ENCODE measurements at regions of chr12 and their contacts with region 1.

Region 1: DNA sequence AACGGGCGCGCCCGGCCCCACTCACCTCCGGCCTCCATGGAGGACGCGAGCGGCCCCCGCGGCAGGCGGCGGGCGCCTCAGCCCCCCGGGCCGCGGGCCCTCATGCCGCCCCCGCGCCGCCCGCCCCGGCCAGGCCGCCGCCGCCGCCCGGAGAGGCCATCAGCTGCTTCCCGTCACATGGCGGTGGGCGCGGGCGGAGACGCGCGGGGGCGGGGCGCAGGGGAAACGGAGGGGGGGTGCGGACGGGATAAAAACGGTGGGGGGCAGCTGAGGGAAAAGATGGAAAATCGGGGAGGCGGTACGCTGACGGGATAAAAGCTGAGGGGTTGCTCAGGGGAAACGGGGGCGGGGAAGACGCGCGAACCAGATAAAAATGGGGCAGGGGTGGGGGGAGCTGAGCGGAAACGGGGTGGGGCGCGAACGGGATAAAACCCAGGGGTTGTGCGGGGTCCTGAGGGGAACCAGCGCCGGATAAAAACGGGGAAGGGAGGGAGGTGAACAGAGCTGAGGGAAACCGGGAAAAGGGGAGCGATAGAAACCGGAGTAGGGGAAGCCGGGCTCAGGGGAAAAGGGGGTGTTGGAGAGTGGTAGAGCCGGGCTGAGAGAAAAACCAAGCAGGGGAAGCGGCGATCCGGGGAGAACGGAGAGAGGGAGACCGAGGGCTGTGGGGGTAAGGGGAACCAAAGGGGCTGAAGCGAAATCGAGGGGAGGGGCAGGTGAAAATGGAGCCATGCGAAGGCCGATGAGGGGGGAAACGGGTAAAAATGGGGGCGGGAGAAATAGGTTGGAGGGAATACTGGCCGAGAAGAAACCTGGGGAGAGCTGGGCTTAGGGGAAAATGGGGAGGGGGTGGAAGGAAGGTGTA is at the start of gene WSB2:
- DNase-seq: peak in 1 of 2 experiments; percentile 55
- H3K4me3 ChIP-seq: peak within 1 kb of the TSS; percentile 79
- H3K27ac ChIP-seq: peak within 1 kb of the TSS; percentile 94
- H3K4me1 ChIP-seq: peaks cover 34% of the 10 kb centered on the region
- H3K27me3 ChIP-seq: no peaks in the 10 kb centered on the region
- CTCF ChIP-seq: no peak
- total RNA-seq, gene WSB2: 44.2 and 46.2 TPM in 2 replicates

Region 2: GRCh38 chr12:117890137-117890536 is 171.1 kb before region 1 on chr12:
- CTCF ChIA-PET with region 1: no interaction called
- POLR2A ChIA-PET with region 1: no interaction called
- intact Hi-C with region 1: no loop called
- DNase-seq: no peak
- H3K4me3 ChIP-seq: no peak overlapping the region
- H3K27ac ChIP-seq: no peak overlapping the region
- H3K4me1 ChIP-seq: no peaks in the 10 kb centered on the region
- H3K27me3 ChIP-seq: no peaks in the 10 kb centered on the region
- CTCF ChIP-seq: no peak; the same call in 1 of the 2 replicates

Region 3: DNA sequence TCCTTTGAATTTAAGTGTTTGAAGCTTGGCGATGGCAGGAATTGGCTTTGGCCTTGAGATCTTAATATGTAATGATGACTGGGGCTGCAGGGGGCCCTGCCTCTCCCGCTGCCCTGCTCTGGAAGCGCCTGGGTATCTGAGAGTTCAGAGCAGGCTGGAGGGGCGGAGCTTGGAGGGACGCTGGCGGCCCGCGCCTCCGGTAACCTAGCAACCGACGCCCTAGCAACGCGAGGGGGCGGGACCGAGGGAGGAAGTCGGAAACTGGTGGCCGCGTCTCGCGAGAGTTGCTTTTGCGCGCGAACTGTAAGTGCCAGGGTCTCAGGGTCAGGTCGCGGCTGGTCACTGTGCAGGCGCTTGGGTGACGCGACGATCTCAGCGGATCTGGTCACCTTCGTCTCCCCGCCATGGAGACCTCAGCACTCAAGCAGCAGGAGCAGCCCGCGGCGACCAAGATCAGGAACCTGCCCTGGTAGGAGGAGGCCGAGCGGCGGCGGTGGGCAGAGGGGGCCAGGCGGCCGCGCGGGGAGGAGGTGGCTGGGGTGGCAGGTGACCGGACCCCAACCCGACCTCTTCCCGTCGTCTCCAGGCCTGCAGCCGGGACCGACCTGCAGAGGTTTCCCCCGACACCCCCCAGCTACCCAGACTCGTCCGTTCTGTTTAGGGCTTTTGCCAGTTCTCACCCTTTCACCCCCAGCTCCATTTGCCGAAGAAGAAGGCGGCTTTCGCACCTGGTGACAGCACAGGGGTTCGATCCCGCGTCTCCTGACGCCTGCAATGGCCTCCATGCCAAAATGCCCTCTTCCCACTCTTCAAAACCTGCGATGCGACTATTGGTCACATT is 44.6 kb before region 1 on chr12 and contains the start of gene RFC5:
- CTCF ChIA-PET with region 1: no interaction called
- POLR2A ChIA-PET with region 1: no interaction called
- intact Hi-C with region 1: loop called (anchors 2 kb)
- DNase-seq: peak; percentile 90 to 97
- H3K4me3 ChIP-seq: peak within 1 kb of the TSS; percentile 89
- H3K27ac ChIP-seq: no peak within 1 kb of the TSS
- H3K4me1 ChIP-seq: peaks cover 16% of the 10 kb centered on the region
- H3K27me3 ChIP-seq: no peaks in the 10 kb centered on the region
- CTCF ChIP-seq: no peak
- total RNA-seq, gene RFC5: 30.3 and 34.7 TPM in 2 replicates

Region 4: DNA sequence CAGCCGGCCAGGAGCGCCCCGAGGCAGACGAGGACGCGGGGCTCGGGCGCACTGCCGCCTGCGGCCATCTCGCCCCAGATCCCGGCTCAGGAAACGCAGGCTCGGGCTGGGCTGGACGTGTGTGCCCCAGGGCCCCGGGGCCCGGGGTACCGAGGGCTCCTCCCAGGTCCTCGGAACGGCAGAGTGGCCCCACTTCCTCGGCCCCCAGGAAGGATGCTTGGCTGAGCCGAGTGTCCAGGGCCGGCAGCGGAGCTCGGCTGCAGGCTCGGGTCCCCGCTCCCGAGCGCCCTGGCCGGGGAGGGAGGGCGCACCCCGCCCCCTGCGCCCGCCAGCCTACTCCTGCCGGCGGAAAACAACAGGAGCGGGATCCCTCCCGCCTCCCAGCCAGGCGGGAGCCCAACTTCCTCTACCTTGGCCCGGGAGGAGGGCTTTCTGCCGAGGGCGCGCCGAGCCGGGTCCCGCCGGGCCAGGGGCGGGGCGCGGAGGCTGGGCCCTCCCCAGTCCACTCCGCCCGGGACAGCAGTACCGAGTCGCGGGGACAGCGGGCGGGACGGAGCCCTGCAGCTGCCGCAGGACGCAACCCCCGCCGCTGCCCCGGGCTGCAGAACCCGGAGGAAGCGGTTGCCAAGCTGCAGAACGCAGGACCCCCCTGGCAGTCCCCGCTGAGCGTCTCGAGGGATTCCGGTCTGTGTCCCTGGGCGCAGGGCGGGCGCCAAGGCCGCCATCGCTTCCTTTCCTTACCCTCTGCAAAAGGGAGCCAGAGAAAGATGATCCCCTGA is 42.5 kb after region 1 on chr12 and contains the start of gene VSIG10:
- CTCF ChIA-PET with region 1: no interaction called
- POLR2A ChIA-PET with region 1: interaction called, 5 read pairs
- intact Hi-C with region 1: loop called (anchors 1 kb)
- DNase-seq: peak; percentile 49 to 82
- H3K4me3 ChIP-seq: peak within 1 kb of the TSS; percentile 81
- H3K27ac ChIP-seq: 0 out of 2 replicates have a peak within 1 kb of the TSS, but pooled peaks have one; percentile 2
- H3K4me1 ChIP-seq: peaks cover 18% of the 10 kb centered on the region
- H3K27me3 ChIP-seq: no peaks in the 10 kb centered on the region
- CTCF ChIP-seq: no peak
- total RNA-seq, gene VSIG10: 45.7 and 49.1 TPM in 2 replicates

Region 5: GRCh38 chr12:118372541-118373495 is 311.6 kb after region 1 on chr12 and contains the start of gene TAOK3:
- CTCF ChIA-PET with region 1: interaction called, 5 read pairs
- POLR2A ChIA-PET with region 1: interaction called, 3 read pairs
- intact Hi-C with region 1: loop called (anchors 1 kb)
- DNase-seq: peak; percentile 96 to 97
- H3K4me3 ChIP-seq: peak within 1 kb of the TSS; percentile 77
- H3K27ac ChIP-seq: peak within 1 kb of the TSS; percentile 72
- H3K4me1 ChIP-seq: peaks cover 30% of the 10 kb centered on the region
- H3K27me3 ChIP-seq: no peaks in the 10 kb centered on the region
- CTCF ChIP-seq: no peak
- total RNA-seq, gene TAOK3: 55.8 and 60.5 TPM in 2 replicates

Region 6: DNA sequence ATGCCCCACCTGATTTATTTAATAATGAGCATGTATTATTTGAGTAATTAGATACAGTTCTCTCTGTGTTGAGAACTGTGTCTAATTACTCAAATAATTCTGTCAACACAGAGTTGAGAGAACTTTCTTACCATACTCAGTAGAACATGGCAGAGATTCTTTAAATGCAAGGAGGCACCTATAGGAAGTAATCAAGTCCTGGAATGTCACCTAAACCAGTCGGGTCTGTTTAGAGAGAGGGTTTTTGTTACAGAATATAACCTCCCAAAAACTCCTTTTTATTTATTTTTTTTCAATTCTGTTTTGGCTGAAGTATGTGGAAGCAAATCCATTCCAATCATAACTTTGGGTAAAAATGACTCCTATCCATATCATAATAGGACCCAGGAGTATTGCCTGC is 1853.4 kb after region 1 on chr12:
- CTCF ChIA-PET with region 1: no interaction called
- POLR2A ChIA-PET with region 1: interaction called, 14 read pairs
- intact Hi-C with region 1: no loop called
- DNase-seq: peak in 1 of 2 experiments; percentile 70
- H3K4me3 ChIP-seq: no peak overlapping the region
- H3K27ac ChIP-seq: peak overlapping the region; percentile 51
- H3K4me1 ChIP-seq: peaks cover 12% of the 10 kb centered on the region
- H3K27me3 ChIP-seq: no peaks in the 10 kb centered on the region
- CTCF ChIP-seq: no peak

Measured in PC-9 (cell line).